ENCODE measurements at regions of chr5 and their contacts with region 1.

Region 1: GRCh38 chr5:35890021-35890696 is 33.5 kb downstream of the IL7R start:
- DNase-seq: no peak
- H3K4me3 ChIP-seq: no peak overlapping the region
- H3K27ac ChIP-seq: no peak overlapping the region
- H3K4me1 ChIP-seq: peaks cover 71% of the 10 kb centered on the region
- CTCF ChIP-seq: no peak

Region 2: GRCh38 chr5:35416217-35416988 is 473.8 kb before region 1 on chr5:
- CTCF ChIA-PET with region 1: no interaction called
- POLR2A ChIA-PET with region 1: no interaction called
- intact Hi-C with region 1: no loop called
- DNase-seq: no peak
- H3K4me3 ChIP-seq: no peak overlapping the region
- H3K27ac ChIP-seq: no peak overlapping the region
- H3K4me1 ChIP-seq: no peaks in the 10 kb centered on the region
- CTCF ChIP-seq: no peak

Region 3: DNA sequence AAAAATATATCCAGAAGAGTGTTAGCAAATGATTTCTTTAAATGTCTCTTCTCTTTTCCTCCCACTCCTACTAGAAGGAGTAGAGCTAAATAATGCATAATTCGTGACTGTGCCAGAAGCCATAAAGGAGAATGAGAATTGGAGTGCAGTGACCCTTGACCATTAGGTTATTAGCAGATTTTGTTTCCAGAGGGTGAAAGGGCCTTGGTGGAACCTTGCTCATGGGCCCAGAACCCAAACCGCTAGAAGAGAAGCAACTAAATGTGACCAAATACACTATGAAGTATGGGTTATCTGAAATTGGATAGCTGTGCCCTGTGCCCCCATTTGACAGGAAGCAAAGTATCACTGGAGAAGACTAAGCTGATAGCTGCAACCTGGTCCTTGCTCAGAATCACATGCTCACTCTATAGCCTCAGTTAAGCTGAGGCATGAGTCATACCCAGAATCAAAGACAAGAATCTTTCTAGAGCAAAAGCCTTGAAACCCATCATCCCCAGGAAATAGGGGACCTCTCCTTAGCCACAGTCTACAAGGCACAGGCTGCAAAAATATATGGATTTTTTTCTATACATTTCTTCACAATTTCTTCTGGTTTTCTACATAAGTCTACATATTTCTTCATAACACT is 12.0 kb after region 1 on chr5:
- CTCF ChIA-PET with region 1: no interaction called
- POLR2A ChIA-PET with region 1: interaction called, 104 read pairs
- intact Hi-C with region 1: no loop called
- DNase-seq: no peak
- H3K4me3 ChIP-seq: no peak overlapping the region
- H3K27ac ChIP-seq: peak overlapping the region; percentile 54
- H3K4me1 ChIP-seq: peaks cover 87% of the 10 kb centered on the region
- CTCF ChIP-seq: no peak

Measured in OCI-LY7 (cell line).